Caco-2 (cell line): ENCODE measurements at regions of chr2 and their contacts with region 1.

Region 1: DNA sequence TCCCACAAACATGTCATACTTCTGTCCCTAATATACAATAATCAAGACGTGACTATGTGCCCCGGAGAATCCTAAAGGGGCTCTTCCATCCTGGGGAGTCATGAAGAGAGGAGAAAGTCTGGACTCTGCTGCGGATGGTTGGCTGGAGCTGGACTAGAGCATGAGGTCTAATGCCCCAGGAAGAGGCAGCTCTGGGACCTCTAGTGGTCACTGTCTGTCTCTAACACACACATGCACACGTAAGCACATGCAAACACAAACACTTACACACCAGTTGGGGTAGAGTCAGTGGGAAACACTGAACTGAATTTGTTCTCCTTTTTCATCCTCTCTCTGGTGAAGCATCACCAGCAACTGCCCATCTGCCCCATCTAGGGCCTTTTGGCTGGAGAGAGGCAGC is 271.6 kb downstream of the TDRD15 start:
- DNase-seq: peak; percentile 32 to 44
- H3K4me3 ChIP-seq: no peak overlapping the region
- H3K4me3 Mint-ChIP-seq: no peak overlapping the region
- H3K27ac Mint-ChIP-seq: no peak overlapping the region
- H3K4me1 ChIP-seq: no peaks in the 10 kb centered on the region
- H3K4me1 Mint-ChIP-seq: peaks cover 7% of the 10 kb centered on the region
- H3K27me3 ChIP-seq: no peaks in the 10 kb centered on the region
- H3K27me3 Mint-ChIP-seq: peaks cover 2% of the 10 kb centered on the region
- CTCF ChIP-seq: peak; percentile 43 to 65

Region 2: DNA sequence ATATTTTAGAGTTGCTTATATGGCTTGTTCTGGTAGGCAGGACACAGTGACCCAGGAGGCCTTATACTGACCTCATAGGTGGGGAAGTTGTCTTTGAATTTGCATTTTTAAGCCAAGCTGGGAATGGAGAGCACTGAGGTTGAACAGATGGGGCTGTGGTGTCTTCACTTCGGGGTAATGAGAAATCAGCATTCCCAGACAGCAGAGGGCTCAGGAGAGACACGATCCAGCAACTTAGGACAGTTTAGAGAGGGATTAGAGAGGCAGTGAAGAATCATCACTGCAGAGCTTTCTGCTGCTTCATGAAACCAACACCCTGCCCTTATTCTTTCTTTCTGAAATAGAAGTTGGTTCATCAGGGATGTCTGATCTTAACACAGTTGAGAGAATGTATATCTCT is 69.2 kb before region 1 on chr2:
- CTCF ChIA-PET with region 1: no interaction called
- POLR2A ChIA-PET with region 1: no interaction called
- intact Hi-C with region 1: loop called (anchors 5 kb)
- DNase-seq: no peak
- H3K4me3 ChIP-seq: no peak overlapping the region
- H3K4me3 Mint-ChIP-seq: no peak overlapping the region
- H3K27ac Mint-ChIP-seq: no peak overlapping the region
- H3K4me1 ChIP-seq: no peaks in the 10 kb centered on the region
- H3K4me1 Mint-ChIP-seq: no peaks in the 10 kb centered on the region
- H3K27me3 ChIP-seq: no peaks in the 10 kb centered on the region
- H3K27me3 Mint-ChIP-seq: no peaks in the 10 kb centered on the region
- CTCF ChIP-seq: peak in 1 of 2 experiments; percentile 9